ENCODE measurements at regions of chr5 and their contacts with region 1.

Region 1: GRCh38 chr5:671459-672328 is 21.5 kb downstream of the TPPP start:
- DNase-seq: peak; percentile 36
- H3K4me3 ChIP-seq: no peak overlapping the region
- H3K27ac ChIP-seq: peak overlapping the region; percentile 20
- H3K4me1 ChIP-seq: peaks cover 26% of the 10 kb centered on the region
- H3K27me3 ChIP-seq: peaks cover 4% of the 10 kb centered on the region
- CTCF ChIP-seq: peak; percentile 69 to 97

Region 2: GRCh38 chr5:149741-150485 is 521.8 kb before region 1 on chr5:
- CTCF ChIA-PET with region 1: no interaction called
- dilution Hi-C with region 1: no loop called
- in situ Hi-C with region 1: no loop called
- intact Hi-C with region 1: no loop called
- DNase-seq: no peak
- H3K4me3 ChIP-seq: no peak overlapping the region
- H3K27ac ChIP-seq: no peak overlapping the region
- H3K4me1 ChIP-seq: no peaks in the 10 kb centered on the region
- H3K27me3 ChIP-seq: peaks cover 2% of the 10 kb centered on the region
- CTCF ChIP-seq: no peak

Region 3: GRCh38 chr5:633501-633955 is 38.2 kb before region 1 on chr5:
- CTCF ChIA-PET with region 1: no interaction called
- dilution Hi-C with region 1: no loop called
- in situ Hi-C with region 1: no loop called
- intact Hi-C with region 1: no loop called
- DNase-seq: no peak
- H3K4me3 ChIP-seq: no peak overlapping the region
- H3K27ac ChIP-seq: no peak overlapping the region
- H3K4me1 ChIP-seq: no peaks in the 10 kb centered on the region
- H3K27me3 ChIP-seq: no peaks in the 10 kb centered on the region
- CTCF ChIP-seq: no peak

Region 4: GRCh38 chr5:902129-902916 is 230.6 kb after region 1 on chr5:
- CTCF ChIA-PET with region 1: no interaction called
- dilution Hi-C with region 1: no loop called
- in situ Hi-C with region 1: loop called (anchors 10 to 25 kb)
- intact Hi-C with region 1: loop called (anchors 2 kb)
- DNase-seq: no peak
- H3K4me3 ChIP-seq: no peak overlapping the region
- H3K27ac ChIP-seq: no peak overlapping the region
- H3K4me1 ChIP-seq: no peaks in the 10 kb centered on the region
- H3K27me3 ChIP-seq: no peaks in the 10 kb centered on the region
- CTCF ChIP-seq: no peak

Measured in mammary epithelial cell (primary cell).